HEK293 (cell line): ENCODE measurements at regions of chr1 and their contacts with region 1.

Region 1: GRCh38 chr1:236103646-236104218 is 38.6 kb upstream of the GPR137B start:
- H3K4me3 ChIP-seq: no peak overlapping the region
- H3K27ac ChIP-seq: no peak overlapping the region
- H3K4me1 ChIP-seq: no peaks in the 10 kb centered on the region
- CTCF ChIP-seq: peak; percentile 94

Region 2: GRCh38 chr1:236489710-236490377 is 386.1 kb after region 1 on chr1:
- CTCF ChIA-PET with region 1: interaction called, 37 read pairs
- POLR2A ChIA-PET with region 1: no interaction called
- H3K4me3 ChIP-seq: no peak overlapping the region
- H3K27ac ChIP-seq: no peak overlapping the region
- H3K4me1 ChIP-seq: no peaks in the 10 kb centered on the region; the same call in 1 of the 2 replicates
- CTCF ChIP-seq: peak; percentile 37; the same call in 1 of the 2 replicates

Region 3: DNA sequence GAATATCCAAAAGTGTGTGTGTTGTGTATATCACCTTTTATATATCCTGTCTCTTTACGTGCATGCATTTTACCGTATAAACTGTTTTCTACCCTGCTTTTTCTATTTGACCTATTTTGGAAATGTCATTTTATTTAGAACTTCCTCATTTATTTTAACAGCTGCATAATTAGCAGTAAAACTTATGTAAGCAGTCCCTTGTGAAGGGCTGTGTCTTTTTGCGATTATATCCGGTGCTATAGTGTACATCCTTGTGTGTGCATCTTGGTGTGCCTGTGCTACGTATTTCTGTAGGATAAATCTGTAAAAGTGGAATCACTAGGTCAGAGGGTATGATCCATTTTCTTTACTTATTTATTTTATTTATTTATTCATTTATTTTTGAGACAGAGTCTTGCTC is 427.2 kb after region 1 on chr1:
- CTCF ChIA-PET with region 1: interaction called, 35 read pairs
- POLR2A ChIA-PET with region 1: no interaction called
- H3K4me3 ChIP-seq: no peak overlapping the region
- H3K27ac ChIP-seq: no peak overlapping the region
- H3K4me1 ChIP-seq: peaks cover 2% of the 10 kb centered on the region; the same call in 1 of the 2 replicates
- CTCF ChIP-seq: no peak